Left lung (tissue), 14 donors: ENCODE measurements at regions of chr1 and their contacts with region 1.

Region 1: DNA sequence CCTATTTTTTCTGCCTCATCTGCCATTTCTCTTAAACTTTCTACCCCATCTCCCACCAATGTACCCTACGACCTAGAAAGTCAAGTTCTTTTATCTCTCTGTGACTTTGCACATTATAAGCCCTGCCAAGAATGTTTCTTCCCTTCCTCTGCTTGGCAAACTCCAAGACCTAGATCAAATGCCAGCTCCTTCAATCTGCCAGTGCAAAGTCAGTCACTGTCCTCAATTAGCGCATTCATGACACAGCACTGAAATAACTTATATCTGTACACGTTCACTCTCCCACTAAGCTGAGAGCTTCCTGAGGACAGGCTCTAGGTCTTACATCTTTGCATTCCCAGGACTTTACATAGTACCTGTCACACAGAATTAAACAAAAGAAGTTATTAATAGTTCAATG is 21.4 kb upstream of the LSM10 start:
- DNase-seq: no peak
- ATAC-seq: no peak
- H3K4me3 ChIP-seq: no peak overlapping the region
- H3K27ac ChIP-seq: no peak overlapping the region
- H3K4me1 ChIP-seq: peaks cover 0 to 21% of the 10 kb centered on the region in 2 donors
- H3K27me3 ChIP-seq: no peaks in the 10 kb centered on the region
- CTCF ChIP-seq: no peak

Region 2: GRCh38 chr1:36342481-36343478 is 76.4 kb before region 1 on chr1:
- intact Hi-C with region 1: loop called in 1 of 2 experiments (anchors 5 kb)
- DNase-seq: no peak
- ATAC-seq: peak; percentile 86
- H3K4me3 ChIP-seq: no peak overlapping the region
- H3K27ac ChIP-seq: peak overlapping the region; percentile 33 to 72
- H3K4me1 ChIP-seq: peaks cover 0 to 49% of the 10 kb centered on the region in 2 donors
- H3K27me3 ChIP-seq: no peaks in the 10 kb centered on the region
- CTCF ChIP-seq: peak; percentile 44 to 70

Region 3: DNA sequence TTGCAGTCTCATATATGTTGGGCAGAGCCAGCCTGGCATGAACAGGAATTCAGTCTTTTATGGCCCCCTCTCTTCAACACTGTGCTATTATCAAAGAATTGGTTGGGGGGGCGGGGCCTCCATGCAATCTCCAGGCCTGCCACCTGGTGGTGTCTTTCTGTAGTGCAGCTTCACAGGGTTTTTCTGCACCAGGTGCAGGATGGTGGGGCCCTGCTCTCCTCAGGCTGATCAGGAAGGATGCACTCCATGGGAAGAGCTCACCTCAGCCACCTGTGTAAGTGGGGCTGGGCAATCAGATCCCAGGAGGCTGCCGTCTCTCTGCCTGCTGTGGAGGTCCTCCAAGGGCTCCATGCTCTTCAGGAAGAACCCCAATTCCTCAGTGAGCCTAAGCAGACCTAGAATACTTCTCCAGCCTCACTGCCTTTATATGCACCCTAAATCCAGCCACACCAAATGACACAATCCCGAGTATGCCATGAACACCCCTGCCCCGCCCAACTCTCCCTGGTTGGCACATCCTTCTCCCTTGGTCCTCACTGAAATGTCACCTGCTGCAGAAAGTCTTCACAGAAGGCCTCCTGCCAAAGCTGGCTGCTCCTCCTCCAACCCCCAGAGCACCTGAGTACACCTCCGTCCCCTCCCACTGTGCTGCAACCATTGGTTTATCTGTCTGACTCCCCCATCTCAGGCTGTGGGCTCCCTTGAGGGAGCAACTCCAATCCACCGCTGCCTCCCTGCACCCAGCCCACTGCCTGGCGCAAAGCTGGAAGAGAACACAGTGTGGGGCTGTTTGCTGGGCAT is 49.9 kb before region 1 on chr1:
- intact Hi-C with region 1: no loop called
- DNase-seq: peak in 3 of 4 donors; percentile 65 to 72 (median 66)
- ATAC-seq: peak; percentile 60
- H3K4me3 ChIP-seq: no peak overlapping the region
- H3K27ac ChIP-seq: peak overlapping the region in 1 of 2 donors; percentile 96
- H3K4me1 ChIP-seq: peaks cover 39 to 100% of the 10 kb centered on the region in 2 donors
- H3K27me3 ChIP-seq: no peaks in the 10 kb centered on the region
- CTCF ChIP-seq: peak; percentile 91 to 95